CD4-positive, alpha-beta memory T cell (primary cell): ENCODE measurements at regions of chr7 and their contacts with region 1.

Region 1: GRCh38 chr7:142796608-142797385 is 26.0 kb downstream of the PRSS2 start:
- DNase-seq: peak in 2 of 5 donors; percentile 41 to 47
- H3K4me3 ChIP-seq: peak overlapping the region; percentile 84 to 85
- H3K4me3 Mint-ChIP-seq: peak overlapping the region; percentile 93 to 100 (median 99)
- H3K27ac ChIP-seq: peak overlapping the region; percentile 99
- H3K27ac Mint-ChIP-seq: peak overlapping the region; percentile 98 to 100 (median 100)
- H3K4me1 ChIP-seq: peaks cover 68% of the 10 kb centered on the region
- H3K4me1 Mint-ChIP-seq: peaks cover 50 to 79% (median 62%) of the 10 kb centered on the region in 4 donors
- H3K27me3 ChIP-seq: no peaks in the 10 kb centered on the region
- H3K27me3 Mint-ChIP-seq: no peaks in the 10 kb centered on the region

Region 2: DNA sequence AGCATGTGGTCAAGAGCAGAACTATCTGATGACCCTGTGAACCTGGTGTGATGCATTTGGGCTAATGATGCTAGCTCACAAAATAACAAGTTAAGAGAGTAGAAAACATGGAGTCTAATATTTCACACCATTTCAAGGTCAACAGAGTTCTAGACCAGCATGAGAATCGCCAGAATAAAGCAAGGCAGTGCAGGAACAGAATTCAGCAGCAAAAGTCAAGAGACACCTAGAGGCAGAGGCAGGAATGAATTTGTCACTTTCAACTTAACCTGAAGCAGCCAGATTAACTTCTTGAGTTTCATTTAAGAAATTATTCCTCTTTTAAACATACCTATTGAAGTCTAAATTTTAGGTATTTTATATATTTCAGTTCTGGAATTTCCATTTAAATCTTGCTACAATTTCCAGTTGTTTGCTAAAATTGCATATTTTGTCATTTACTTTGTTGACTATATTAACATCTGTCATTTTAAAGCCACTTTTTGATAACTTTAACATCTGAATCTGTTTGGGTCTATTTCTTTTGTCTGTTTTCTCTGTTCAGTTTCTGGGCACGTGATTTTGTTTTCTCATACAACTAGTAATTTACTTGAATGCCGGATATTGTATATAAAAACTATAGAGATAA is 494.8 kb before region 1 on chr7:
- CTCF ChIA-PET with region 1: interaction called, 4 read pairs
- POLR2A ChIA-PET with region 1: interaction called, 76 read pairs
- intact Hi-C with region 1: no loop called
- DNase-seq: no peak
- H3K4me3 ChIP-seq: no peak overlapping the region
- H3K4me3 Mint-ChIP-seq: no peak overlapping the region
- H3K27ac ChIP-seq: no peak overlapping the region
- H3K27ac Mint-ChIP-seq: no peak overlapping the region
- H3K4me1 ChIP-seq: peaks cover 8% of the 10 kb centered on the region
- H3K4me1 Mint-ChIP-seq: peaks cover 14 to 28% (median 18%) of the 10 kb centered on the region in 4 donors
- H3K27me3 ChIP-seq: no peaks in the 10 kb centered on the region
- H3K27me3 Mint-ChIP-seq: peaks cover 15 to 18% of the 10 kb centered on the region in 2 donors

Region 3: GRCh38 chr7:142352543-142352942 is 444.3 kb before region 1 on chr7:
- CTCF ChIA-PET with region 1: interaction called, 3 read pairs
- POLR2A ChIA-PET with region 1: interaction called, 153 read pairs
- intact Hi-C with region 1: no loop called
- DNase-seq: peak in 1 of 5 donors; percentile 19
- H3K4me3 ChIP-seq: peak overlapping the region in 1 of 2 donors; percentile 26
- H3K4me3 Mint-ChIP-seq: peak overlapping the region in 7 of 8 donors; percentile 63 to 83 (median 77)
- H3K27ac ChIP-seq: peak overlapping the region; percentile 38
- H3K27ac Mint-ChIP-seq: peak overlapping the region; percentile 72 to 90 (median 88)
- H3K4me1 ChIP-seq: peaks cover 34% of the 10 kb centered on the region
- H3K4me1 Mint-ChIP-seq: peaks cover 21 to 48% (median 37%) of the 10 kb centered on the region in 4 donors
- H3K27me3 ChIP-seq: no peaks in the 10 kb centered on the region
- H3K27me3 Mint-ChIP-seq: peaks cover 0 to 1% of the 10 kb centered on the region in 2 donors

Region 4: DNA sequence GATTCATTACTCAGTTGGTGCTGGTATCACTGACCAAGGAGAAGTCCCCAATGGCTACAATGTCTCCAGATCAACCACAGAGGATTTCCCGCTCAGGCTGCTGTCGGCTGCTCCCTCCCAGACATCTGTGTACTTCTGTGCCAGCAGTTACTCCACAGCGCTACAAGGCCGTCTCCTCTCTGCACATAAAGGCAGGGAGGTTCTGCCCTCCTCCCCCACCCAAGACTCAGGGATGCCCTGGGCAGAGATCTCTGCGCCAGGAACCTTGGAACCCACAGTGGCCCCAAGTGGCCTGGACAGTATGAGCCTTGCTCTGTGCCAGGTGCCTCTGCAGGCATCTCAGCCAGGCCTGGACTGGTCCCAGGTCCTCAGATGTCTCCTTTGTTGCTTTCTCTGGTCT is 345.5 kb before region 1 on chr7:
- CTCF ChIA-PET with region 1: no interaction called
- POLR2A ChIA-PET with region 1: interaction called, 41 read pairs
- intact Hi-C with region 1: no loop called
- DNase-seq: no peak
- H3K4me3 ChIP-seq: no peak overlapping the region
- H3K4me3 Mint-ChIP-seq: peak overlapping the region in 3 of 8 donors; percentile 8 to 65 (median 35)
- H3K27ac ChIP-seq: no peak overlapping the region
- H3K27ac Mint-ChIP-seq: peak overlapping the region in 2 of 7 donors; percentile 22 to 63
- H3K4me1 ChIP-seq: peaks cover 6% of the 10 kb centered on the region
- H3K4me1 Mint-ChIP-seq: peaks cover 11 to 30% (median 19%) of the 10 kb centered on the region in 4 donors
- H3K27me3 ChIP-seq: no peaks in the 10 kb centered on the region
- H3K27me3 Mint-ChIP-seq: peaks cover 0 to 2% of the 10 kb centered on the region in 2 donors

Region 5: GRCh38 chr7:142535123-142535779 is 261.5 kb before region 1 on chr7:
- CTCF ChIA-PET with region 1: no interaction called
- POLR2A ChIA-PET with region 1: interaction called, 71 read pairs
- intact Hi-C with region 1: loop called (anchors 5 kb)
- DNase-seq: peak; percentile 57 to 80 (median 64)
- H3K4me3 ChIP-seq: peak overlapping the region in 1 of 2 donors; percentile 38
- H3K4me3 Mint-ChIP-seq: peak overlapping the region; percentile 61 to 86 (median 76)
- H3K27ac ChIP-seq: peak overlapping the region; percentile 49
- H3K27ac Mint-ChIP-seq: peak overlapping the region; percentile 32 to 94 (median 87)
- H3K4me1 ChIP-seq: peaks cover 28% of the 10 kb centered on the region
- H3K4me1 Mint-ChIP-seq: peaks cover 17 to 40% (median 23%) of the 10 kb centered on the region in 4 donors
- H3K27me3 ChIP-seq: no peaks in the 10 kb centered on the region
- H3K27me3 Mint-ChIP-seq: peaks cover 0 to 2% of the 10 kb centered on the region in 2 donors

Region 6: DNA sequence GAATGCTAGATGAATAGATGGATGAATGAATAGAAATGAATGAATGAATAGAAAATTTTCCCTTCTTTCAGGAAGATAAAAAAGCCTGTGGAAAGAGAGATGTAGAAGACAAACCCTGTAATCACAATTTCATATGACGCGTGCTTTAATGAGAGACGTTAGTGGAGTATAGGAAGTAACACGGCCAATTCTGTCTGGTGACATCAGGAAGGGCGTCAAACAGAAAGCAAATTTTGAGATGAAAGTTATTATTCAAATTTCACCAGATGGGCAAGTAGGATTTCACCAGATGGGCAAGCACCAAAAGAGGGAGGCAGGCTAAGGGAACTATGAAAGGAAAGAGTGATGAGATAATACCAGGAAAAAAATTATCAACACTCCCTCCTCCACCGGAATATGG is 176.4 kb before region 1 on chr7:
- CTCF ChIA-PET with region 1: no interaction called
- POLR2A ChIA-PET with region 1: interaction called, 65 read pairs
- intact Hi-C with region 1: loop called (anchors 5 kb)
- DNase-seq: no peak
- H3K4me3 ChIP-seq: no peak overlapping the region
- H3K4me3 Mint-ChIP-seq: peak overlapping the region in 7 of 8 donors; percentile 33 to 73 (median 62)
- H3K27ac ChIP-seq: peak overlapping the region; percentile 41
- H3K27ac Mint-ChIP-seq: peak overlapping the region; percentile 78 to 89 (median 79)
- H3K4me1 ChIP-seq: no peaks in the 10 kb centered on the region
- H3K4me1 Mint-ChIP-seq: peaks cover under 1 to 5% (median 2%) of the 10 kb centered on the region in 4 donors
- H3K27me3 ChIP-seq: no peaks in the 10 kb centered on the region
- H3K27me3 Mint-ChIP-seq: peaks cover 0 to 3% of the 10 kb centered on the region in 2 donors

Region 7: GRCh38 chr7:142746264-142746663 is 50.5 kb before region 1 on chr7:
- CTCF ChIA-PET with region 1: no interaction called
- POLR2A ChIA-PET with region 1: no interaction called
- intact Hi-C with region 1: no loop called
- DNase-seq: no peak
- H3K4me3 ChIP-seq: no peak overlapping the region
- H3K4me3 Mint-ChIP-seq: no peak overlapping the region
- H3K27ac ChIP-seq: no peak overlapping the region
- H3K27ac Mint-ChIP-seq: no peak overlapping the region
- H3K4me1 ChIP-seq: no peaks in the 10 kb centered on the region
- H3K4me1 Mint-ChIP-seq: no peaks in the 10 kb centered on the region
- H3K27me3 ChIP-seq: no peaks in the 10 kb centered on the region
- H3K27me3 Mint-ChIP-seq: no peaks in the 10 kb centered on the region

Region 8: DNA sequence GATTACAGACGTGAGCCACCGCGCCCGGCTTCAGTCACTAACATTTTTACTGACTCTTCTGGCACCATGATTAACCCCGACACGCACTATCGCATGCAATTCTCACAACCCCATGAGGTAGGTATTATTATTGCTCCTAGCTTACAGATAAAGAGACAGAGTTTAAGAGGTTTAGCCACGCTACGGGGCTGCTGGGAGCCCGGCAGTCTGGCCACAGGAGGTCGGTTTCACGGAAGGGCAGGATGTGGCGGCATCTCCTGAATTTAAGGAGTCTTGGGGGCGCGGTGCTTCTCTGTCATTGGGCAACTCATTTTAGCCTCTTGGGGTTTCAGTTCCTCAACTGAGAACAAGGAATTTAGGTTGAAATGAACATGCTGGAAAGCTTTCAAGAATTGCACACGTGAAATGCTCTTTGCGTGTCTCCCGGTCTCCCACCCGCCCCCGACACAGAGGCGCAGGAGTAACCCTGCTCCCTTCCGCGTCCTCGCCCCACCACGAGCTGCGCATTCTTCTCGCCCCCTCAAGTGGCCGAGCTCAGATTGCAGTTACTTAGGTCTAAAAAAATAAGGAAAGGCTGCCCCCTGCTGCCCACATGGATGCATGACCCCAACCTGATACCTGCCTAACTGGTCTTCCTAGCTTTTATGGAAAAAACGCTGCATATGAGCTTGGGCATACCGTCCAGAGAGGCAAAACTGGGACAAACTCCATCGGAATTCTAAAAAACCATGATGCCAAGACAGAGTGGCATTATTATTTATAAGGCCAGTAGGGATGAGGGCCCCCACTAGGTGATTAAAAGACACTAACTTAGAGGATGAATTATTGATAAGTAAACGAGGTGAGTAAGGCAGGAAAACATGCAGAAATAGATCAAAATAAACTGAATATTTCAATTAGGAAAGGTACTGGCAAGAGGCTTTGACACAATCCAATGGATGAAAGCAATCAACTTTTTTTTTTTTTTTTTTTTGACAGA is 13.6 kb before region 1 on chr7:
- CTCF ChIA-PET with region 1: interaction called, 47 read pairs
- POLR2A ChIA-PET with region 1: interaction called, 6,843 read pairs
- intact Hi-C with region 1: loop called (anchors 1 kb)
- DNase-seq: peak; percentile 73 to 82 (median 78)
- H3K4me3 ChIP-seq: peak overlapping the region in 1 of 2 donors; percentile 49
- H3K4me3 Mint-ChIP-seq: peak overlapping the region; percentile 81 to 90 (median 86)
- H3K27ac ChIP-seq: peak overlapping the region; percentile 21
- H3K27ac Mint-ChIP-seq: peak overlapping the region; percentile 92 to 100 (median 98)
- H3K4me1 ChIP-seq: peaks cover 17% of the 10 kb centered on the region
- H3K4me1 Mint-ChIP-seq: peaks cover 6 to 17% (median 7%) of the 10 kb centered on the region in 4 donors
- H3K27me3 ChIP-seq: no peaks in the 10 kb centered on the region
- H3K27me3 Mint-ChIP-seq: no peaks in the 10 kb centered on the region

Region 9: GRCh38 chr7:142960955-142961512 is 164.2 kb after region 1 on chr7:
- CTCF ChIA-PET with region 1: no interaction called
- POLR2A ChIA-PET with region 1: no interaction called
- intact Hi-C with region 1: no loop called
- DNase-seq: no peak
- H3K4me3 ChIP-seq: no peak overlapping the region
- H3K4me3 Mint-ChIP-seq: no peak overlapping the region
- H3K27ac ChIP-seq: no peak overlapping the region
- H3K27ac Mint-ChIP-seq: no peak overlapping the region
- H3K4me1 ChIP-seq: no peaks in the 10 kb centered on the region
- H3K4me1 Mint-ChIP-seq: no peaks in the 10 kb centered on the region
- H3K27me3 ChIP-seq: no peaks in the 10 kb centered on the region
- H3K27me3 Mint-ChIP-seq: peaks cover 29 to 35% of the 10 kb centered on the region in 2 donors